Naive thymus-derived CD4-positive, alpha-beta T cell (primary cell): ENCODE measurements at regions of chr17 and their contacts with region 1.

Region 1: DNA sequence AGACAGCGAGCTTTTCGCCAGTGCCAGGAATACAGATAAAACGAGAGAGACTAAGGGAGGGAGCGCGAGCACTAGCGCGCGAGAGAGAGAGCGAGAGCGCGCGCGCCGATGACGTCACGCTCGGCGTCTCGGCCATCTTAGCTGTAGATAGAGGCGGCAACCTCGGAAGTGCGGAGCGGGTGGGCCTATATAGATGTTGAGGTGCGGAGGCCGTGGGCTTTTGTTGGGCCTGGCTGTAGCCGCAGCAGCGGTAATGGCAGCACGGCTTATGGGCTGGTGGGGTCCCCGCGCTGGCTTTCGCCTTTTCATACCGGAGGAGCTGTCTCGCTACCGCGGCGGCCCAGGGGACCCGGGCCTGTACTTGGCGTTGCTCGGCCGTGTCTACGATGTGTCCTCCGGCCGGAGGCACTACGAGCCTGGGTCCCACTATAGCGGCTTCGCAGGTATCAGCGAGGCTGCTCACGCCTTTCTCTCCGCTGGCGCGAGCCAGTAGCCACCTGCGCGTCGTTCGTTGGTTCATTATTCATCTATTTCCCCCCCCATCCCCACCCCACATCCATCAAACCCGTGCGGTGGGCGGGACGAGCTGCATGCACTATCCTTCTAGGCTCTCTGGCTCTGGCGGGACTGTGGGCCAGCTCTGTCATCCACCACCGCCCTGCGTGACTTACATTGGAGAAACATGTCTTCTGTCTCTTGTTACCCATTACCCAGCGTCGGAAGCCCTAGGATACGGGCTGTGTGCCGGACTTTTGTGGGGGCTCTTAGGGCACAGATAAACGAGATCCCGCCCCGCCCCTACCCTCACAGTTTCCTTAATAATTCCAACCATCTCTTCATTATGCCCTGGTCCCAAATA is 795 bp downstream of the CYB5D2 start:
- DNase-seq: peak; percentile 85 to 94 (median 91)
- ATAC-seq: peak; percentile 81
- H3K4me3 ChIP-seq: peak overlapping the region; percentile 90
- H3K4me3 Mint-ChIP-seq: peak overlapping the region; percentile 94 to 100 (median 99)
- H3K27ac ChIP-seq: peak overlapping the region; percentile 100
- H3K27ac Mint-ChIP-seq: peak overlapping the region; percentile 99 to 100 (median 100)
- H3K4me1 ChIP-seq: peaks cover 36 to 40% of the 10 kb centered on the region in 2 donors
- H3K4me1 Mint-ChIP-seq: peaks cover 36 to 48% (median 46%) of the 10 kb centered on the region in 7 donors
- H3K27me3 ChIP-seq: no peaks in the 10 kb centered on the region
- H3K27me3 Mint-ChIP-seq: peaks cover 0 to 2% (median 0%) of the 10 kb centered on the region in 5 donors

Region 2: DNA sequence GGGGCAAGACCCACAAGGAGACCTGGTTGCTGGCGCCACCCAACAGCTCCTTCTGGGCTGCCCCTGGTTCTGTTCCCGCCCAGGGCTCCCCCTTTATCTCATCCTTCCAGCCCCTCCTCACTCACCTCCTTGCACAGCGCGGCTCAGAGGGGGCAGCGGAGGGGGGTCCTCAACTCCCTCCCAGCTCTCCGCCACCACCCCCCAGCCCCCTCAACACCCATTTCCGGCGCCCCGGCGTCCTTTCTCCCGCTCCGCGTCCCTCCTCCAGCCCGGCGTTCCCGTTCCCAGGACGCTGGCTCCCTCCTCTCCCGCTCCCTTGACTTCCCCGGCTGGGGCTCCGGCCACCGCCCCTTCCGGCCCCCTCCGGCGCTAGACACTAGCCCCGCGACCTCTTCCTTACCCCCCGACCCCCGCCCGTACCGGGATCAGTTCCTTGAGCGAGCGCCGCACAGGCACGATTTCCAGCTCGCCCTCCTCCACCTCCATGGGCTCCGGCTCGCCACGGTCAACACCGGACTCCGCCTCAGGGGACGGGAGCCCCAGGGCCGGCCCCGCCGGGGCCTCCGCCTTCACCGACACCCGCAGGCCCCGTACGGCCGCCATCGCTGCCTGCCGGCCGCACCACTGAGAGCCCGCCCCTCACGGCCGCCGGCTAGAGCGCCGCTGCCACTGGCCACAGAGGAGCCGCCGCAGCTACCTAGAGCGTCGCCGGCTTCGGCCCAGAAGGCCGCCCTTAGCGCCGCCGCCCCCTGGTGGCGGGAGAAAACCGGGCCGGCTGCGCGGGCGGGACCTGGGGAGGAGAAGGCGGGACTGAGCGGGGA is 298.0 kb before region 1 on chr17 and contains the start of gene NCBP3:
- CTCF ChIA-PET with region 1: no interaction called
- POLR2A ChIA-PET with region 1: interaction called, 3 read pairs
- intact Hi-C with region 1: loop called (anchors 1 to 2 kb)
- DNase-seq: peak; percentile 79 to 98 (median 90)
- ATAC-seq: peak; percentile 98
- H3K4me3 ChIP-seq: peak within 1 kb of the TSS; percentile 83
- H3K4me3 Mint-ChIP-seq: peak within 1 kb of the TSS; percentile 85 to 98 (median 90)
- H3K27ac ChIP-seq: peak within 1 kb of the TSS; percentile 90
- H3K27ac Mint-ChIP-seq: peak within 1 kb of the TSS; percentile 59 to 95 (median 88)
- H3K4me1 ChIP-seq: peaks cover 12 to 17% of the 10 kb centered on the region in 2 donors
- H3K4me1 Mint-ChIP-seq: peaks cover 18 to 33% (median 24%) of the 10 kb centered on the region in 7 donors
- H3K27me3 ChIP-seq: no peaks in the 10 kb centered on the region
- H3K27me3 Mint-ChIP-seq: peaks cover 0 to 13% (median 0%) of the 10 kb centered on the region in 5 donors
- total RNA-seq, gene NCBP3: 40.6 to 49.4 (median 46.7) TPM

Region 3: GRCh38 chr17:4161179-4161559 is 17.4 kb after region 1 on chr17:
- CTCF ChIA-PET with region 1: no interaction called
- POLR2A ChIA-PET with region 1: interaction called, 33 read pairs
- intact Hi-C with region 1: no loop called
- DNase-seq: no peak
- ATAC-seq: no peak
- H3K4me3 ChIP-seq: no peak overlapping the region
- H3K4me3 Mint-ChIP-seq: no peak overlapping the region
- H3K27ac ChIP-seq: peak overlapping the region; percentile 25
- H3K27ac Mint-ChIP-seq: peak overlapping the region in 7 of 9 donors; percentile 7 to 75 (median 46)
- H3K4me1 ChIP-seq: peaks cover 0 to 2% of the 10 kb centered on the region in 2 donors
- H3K4me1 Mint-ChIP-seq: peaks cover 0 to 16% (median 5%) of the 10 kb centered on the region in 7 donors
- H3K27me3 ChIP-seq: no peaks in the 10 kb centered on the region
- H3K27me3 Mint-ChIP-seq: no peaks in the 10 kb centered on the region

Region 4: DNA sequence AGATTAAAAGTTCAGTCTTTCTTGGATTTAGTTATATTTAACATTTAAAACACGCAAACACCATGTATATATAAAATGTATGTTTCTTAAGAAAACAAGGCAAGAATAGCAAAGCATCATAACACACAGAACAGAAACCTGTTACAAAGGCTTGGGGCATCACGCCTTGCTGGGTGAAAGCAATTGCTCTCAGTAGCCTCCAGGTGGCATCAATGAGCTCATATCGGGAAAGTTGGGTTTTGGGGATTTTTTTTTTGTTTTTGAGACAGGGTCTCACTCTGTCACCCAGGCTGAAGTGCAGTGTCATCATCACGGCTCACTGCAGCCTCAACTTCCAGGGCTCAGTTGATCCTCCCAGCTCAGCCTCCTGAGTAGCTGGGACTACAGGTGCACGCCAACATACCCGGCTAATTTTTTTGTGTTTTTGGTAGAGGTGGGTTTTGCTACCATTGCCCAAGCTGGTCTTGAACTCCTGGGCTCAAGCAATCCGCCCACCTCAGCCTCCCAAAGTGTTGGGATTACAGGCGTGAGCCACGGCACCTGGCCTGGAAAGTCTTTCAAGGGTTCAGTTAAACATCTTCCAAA is 56.1 kb after region 1 on chr17:
- CTCF ChIA-PET with region 1: interaction called, 3 read pairs
- POLR2A ChIA-PET with region 1: interaction called, 5 read pairs
- intact Hi-C with region 1: loop called in 1 of 2 experiments (anchors 1 kb)
- DNase-seq: peak in 5 of 9 donors; percentile 36 to 49 (median 41)
- ATAC-seq: peak; percentile 75
- H3K4me3 ChIP-seq: no peak overlapping the region
- H3K4me3 Mint-ChIP-seq: no peak overlapping the region
- H3K27ac ChIP-seq: no peak overlapping the region
- H3K27ac Mint-ChIP-seq: peak overlapping the region in 1 of 9 donors; percentile 28
- H3K4me1 ChIP-seq: no peaks in the 10 kb centered on the region
- H3K4me1 Mint-ChIP-seq: peaks cover 0 to 10% (median 0%) of the 10 kb centered on the region in 7 donors
- H3K27me3 ChIP-seq: no peaks in the 10 kb centered on the region
- H3K27me3 Mint-ChIP-seq: no peaks in the 10 kb centered on the region

Region 5: DNA sequence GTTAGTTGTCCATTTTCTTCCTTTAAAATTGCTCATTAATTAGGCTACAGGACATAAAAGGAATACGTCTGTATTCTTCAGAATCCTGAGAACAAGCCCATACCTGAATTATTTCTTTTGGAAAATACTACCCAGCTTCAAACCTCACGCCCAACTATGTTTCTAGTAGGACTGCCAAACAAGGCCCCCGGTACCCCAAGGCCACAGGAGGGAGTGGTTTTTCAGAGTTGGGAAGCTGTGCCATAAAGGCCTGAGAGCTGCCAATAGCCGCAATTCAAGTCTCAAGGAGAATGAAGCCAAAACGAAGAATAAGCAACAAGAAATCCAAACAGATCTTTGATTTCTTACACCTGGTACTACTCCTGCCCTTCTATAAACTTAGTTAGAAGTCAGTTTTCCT is 174.4 kb after region 1 on chr17:
- CTCF ChIA-PET with region 1: no interaction called
- POLR2A ChIA-PET with region 1: no interaction called
- intact Hi-C with region 1: no loop called
- DNase-seq: no peak
- ATAC-seq: no peak
- H3K4me3 ChIP-seq: no peak overlapping the region
- H3K4me3 Mint-ChIP-seq: no peak overlapping the region
- H3K27ac ChIP-seq: no peak overlapping the region
- H3K27ac Mint-ChIP-seq: peak overlapping the region in 4 of 9 donors; percentile 1 to 66 (median 52)
- H3K4me1 ChIP-seq: peaks cover 8 to 10% of the 10 kb centered on the region in 2 donors
- H3K4me1 Mint-ChIP-seq: peaks cover 35 to 86% (median 78%) of the 10 kb centered on the region in 7 donors
- H3K27me3 ChIP-seq: no peaks in the 10 kb centered on the region
- H3K27me3 Mint-ChIP-seq: no peaks in the 10 kb centered on the region

Region 6: GRCh38 chr17:4375039-4375748 is 231.4 kb after region 1 on chr17:
- CTCF ChIA-PET with region 1: no interaction called
- POLR2A ChIA-PET with region 1: no interaction called
- intact Hi-C with region 1: loop called in 1 of 2 experiments (anchors 2 kb)
- DNase-seq: peak in 1 of 9 donors; percentile 67
- ATAC-seq: peak; percentile 65
- H3K4me3 ChIP-seq: no peak overlapping the region
- H3K4me3 Mint-ChIP-seq: peak overlapping the region in 9 of 10 donors; percentile 1 to 82 (median 40)
- H3K27ac ChIP-seq: no peak overlapping the region
- H3K27ac Mint-ChIP-seq: peak overlapping the region in 8 of 9 donors; percentile 18 to 92 (median 66)
- H3K4me1 ChIP-seq: peaks cover 8% of the 10 kb centered on the region in 2 donors
- H3K4me1 Mint-ChIP-seq: peaks cover 11 to 31% (median 15%) of the 10 kb centered on the region in 7 donors
- H3K27me3 ChIP-seq: no peaks in the 10 kb centered on the region
- H3K27me3 Mint-ChIP-seq: no peaks in the 10 kb centered on the region

Region 7: GRCh38 chr17:4833178-4833940 is 689.6 kb after region 1 on chr17 and contains the start of gene MINK1:
- CTCF ChIA-PET with region 1: no interaction called
- POLR2A ChIA-PET with region 1: no interaction called
- intact Hi-C with region 1: loop called in 1 of 2 experiments (anchors 1 kb)
- DNase-seq: peak; percentile 80 to 89 (median 85)
- ATAC-seq: peak; percentile 96
- H3K4me3 ChIP-seq: peak within 1 kb of the TSS; percentile 87
- H3K4me3 Mint-ChIP-seq: peak within 1 kb of the TSS; percentile 89 to 99 (median 96)
- H3K27ac ChIP-seq: peak within 1 kb of the TSS; percentile 85
- H3K27ac Mint-ChIP-seq: peak within 1 kb of the TSS; percentile 82 to 97 (median 92)
- H3K4me1 ChIP-seq: peaks cover 14 to 27% of the 10 kb centered on the region in 2 donors
- H3K4me1 Mint-ChIP-seq: peaks cover 34 to 42% (median 38%) of the 10 kb centered on the region in 7 donors
- H3K27me3 ChIP-seq: no peaks in the 10 kb centered on the region
- H3K27me3 Mint-ChIP-seq: peaks cover 0 to 5% (median 0%) of the 10 kb centered on the region in 5 donors
- total RNA-seq, gene MINK1: 88.8 to 142 (median 125) TPM